Activated T-helper 2 cell treated with anti-CD3 and anti-CD28 coated beads, Interferon-gamma antibody, Interleukin-2, Interleukin-4, amounts not matched to agents 10 μg/mL and 5 μg/mL and 100 μg/mL, durations not matched to agents 14 hours and 24 hours and 36 hours (primary cell): ENCODE measurements at regions of chr10 and their contacts with region 1.

Region 1: DNA sequence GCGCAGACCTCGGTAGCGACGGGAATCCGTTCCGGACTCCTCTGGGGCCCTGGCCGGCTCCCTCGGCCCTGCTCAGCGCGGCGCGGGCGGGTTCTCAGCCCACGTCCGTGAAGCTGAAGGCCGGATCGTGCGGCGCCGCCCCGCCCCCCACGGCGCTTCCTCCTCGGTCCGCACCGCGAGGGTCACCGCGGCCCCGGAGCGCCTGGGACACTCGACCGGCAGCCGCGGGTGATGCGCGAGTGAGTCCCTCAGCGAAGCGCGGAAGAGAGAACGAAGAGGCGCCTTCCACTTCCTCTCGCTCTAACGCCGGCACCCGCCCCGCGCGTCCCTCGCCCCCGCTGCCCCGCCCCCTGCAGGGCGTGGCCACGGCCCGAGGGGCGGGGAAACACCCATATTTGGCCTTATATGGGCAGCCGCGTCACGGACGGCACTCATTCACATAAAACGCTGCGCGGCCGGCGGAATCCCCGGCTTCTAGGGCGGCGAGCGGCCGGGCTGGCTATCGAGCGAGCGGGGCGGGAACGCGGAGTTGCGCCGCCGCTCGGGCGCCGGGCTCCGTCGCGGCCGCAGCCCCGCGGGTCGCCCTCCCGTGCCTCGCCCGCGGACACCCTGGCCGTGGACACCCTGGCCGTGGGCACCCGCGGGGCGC is at the start of gene DUSP5:
- DNase-seq: peak; percentile 95
- H3K4me3 Mint-ChIP-seq: peak within 1 kb of the TSS; percentile 97
- H3K27ac Mint-ChIP-seq: peak within 1 kb of the TSS; percentile 84
- H3K4me1 Mint-ChIP-seq: peaks cover 47% of the 10 kb centered on the region
- H3K27me3 Mint-ChIP-seq: no peaks in the 10 kb centered on the region
- total RNA-seq, gene DUSP5: 84.3 and 86.2 TPM in 2 replicates

Region 2: DNA sequence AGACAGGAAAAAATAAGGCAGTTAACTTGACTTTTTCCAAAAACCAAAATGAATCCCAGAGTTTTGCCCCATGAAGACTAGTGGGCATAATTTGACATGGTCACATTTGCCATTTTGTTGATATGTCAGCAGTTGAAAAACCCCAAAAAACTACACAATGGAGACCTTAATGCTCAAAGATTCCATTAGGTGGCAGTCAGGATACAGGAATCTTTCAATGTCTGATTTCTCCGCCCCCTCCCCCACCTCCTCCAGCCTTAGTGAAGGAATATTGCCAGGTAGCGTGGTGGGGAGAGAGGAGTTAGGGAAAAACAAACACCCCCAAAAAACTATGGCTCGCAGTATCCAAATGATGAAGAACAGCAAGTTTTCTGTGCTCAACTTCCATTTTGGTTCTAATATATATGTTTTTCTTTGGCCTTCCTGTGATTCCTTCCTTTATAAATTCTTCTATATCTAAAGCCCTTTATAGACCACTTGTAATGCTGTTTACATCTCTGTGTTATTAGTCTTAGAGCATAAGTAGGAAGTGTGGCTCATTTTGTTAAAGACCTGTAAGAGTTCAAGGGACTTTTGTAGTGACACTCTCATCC is 186.1 kb before region 1 on chr10:
- intact Hi-C with region 1: loop called (anchors 2 kb)
- DNase-seq: no peak
- H3K4me3 Mint-ChIP-seq: no peak overlapping the region
- H3K27ac Mint-ChIP-seq: no peak overlapping the region
- H3K4me1 Mint-ChIP-seq: peaks cover 33% of the 10 kb centered on the region
- H3K27me3 Mint-ChIP-seq: no peaks in the 10 kb centered on the region

Region 3: GRCh38 chr10:110460111-110460809 is 37.3 kb before region 1 on chr10:
- intact Hi-C with region 1: loop called (anchors 5 kb)
- DNase-seq: no peak
- H3K4me3 Mint-ChIP-seq: no peak overlapping the region
- H3K27ac Mint-ChIP-seq: no peak overlapping the region
- H3K4me1 Mint-ChIP-seq: peaks cover 46% of the 10 kb centered on the region
- H3K27me3 Mint-ChIP-seq: no peaks in the 10 kb centered on the region

Region 4: DNA sequence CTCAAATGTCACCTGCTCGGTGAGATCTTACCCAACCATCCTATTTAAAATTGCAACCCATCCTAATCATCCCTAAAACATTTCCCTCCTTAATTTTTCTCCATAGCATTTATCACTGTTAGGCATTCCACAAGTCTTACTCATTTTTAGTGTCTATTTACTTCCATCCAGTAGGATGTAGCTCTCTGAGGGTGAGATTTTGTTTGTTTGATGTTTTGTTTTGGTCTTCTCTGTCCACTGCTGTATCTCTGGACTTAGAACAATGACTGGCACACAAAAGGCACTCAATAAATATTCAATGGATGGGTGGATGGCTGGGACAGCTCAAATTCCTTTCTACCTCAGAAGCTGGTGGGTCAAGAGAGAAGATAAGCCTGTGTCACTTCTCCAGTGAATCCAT is 15.6 kb before region 1 on chr10:
- intact Hi-C with region 1: no loop called
- DNase-seq: no peak
- H3K4me3 Mint-ChIP-seq: no peak overlapping the region
- H3K27ac Mint-ChIP-seq: no peak overlapping the region
- H3K4me1 Mint-ChIP-seq: peaks cover 2% of the 10 kb centered on the region
- H3K27me3 Mint-ChIP-seq: peaks cover 6% of the 10 kb centered on the region

Region 5: DNA sequence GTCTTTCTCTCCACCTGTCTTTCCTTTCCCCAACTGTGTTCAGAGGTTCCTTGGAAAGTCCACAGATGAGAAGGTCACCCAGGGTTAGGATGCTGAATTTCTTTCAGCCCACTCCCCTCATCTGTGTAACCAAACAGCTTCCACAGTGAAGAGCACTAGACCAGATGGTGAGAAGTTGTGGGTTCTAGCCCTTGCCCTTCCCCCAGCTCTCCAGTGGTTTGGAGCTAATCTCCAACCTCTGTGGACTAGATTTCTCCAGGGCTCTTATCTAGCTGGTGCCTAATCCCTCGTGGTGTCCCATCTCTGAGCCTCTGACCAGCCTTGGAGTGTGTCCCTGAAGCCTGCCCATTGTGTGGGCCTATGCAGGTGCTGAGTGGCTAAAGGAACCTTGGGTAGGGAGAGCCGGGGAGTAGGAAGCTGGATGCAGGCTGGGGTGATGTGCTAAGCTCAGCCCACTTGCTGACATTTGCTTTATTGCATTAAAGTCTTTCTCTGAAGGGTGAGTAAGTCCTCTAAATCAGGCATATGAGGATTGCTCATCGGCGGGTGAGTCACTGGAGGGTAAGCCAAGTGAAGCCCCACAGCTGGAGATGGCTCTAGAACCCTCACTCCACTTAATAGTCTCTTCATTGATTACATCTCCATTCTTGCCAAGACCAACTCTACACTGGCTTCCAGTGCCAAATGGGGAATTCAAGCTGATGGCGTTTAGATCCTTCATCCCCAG is 15.1 kb after region 1 on chr10:
- intact Hi-C with region 1: loop called (anchors 2 kb)
- DNase-seq: no peak
- H3K4me3 Mint-ChIP-seq: peak overlapping the region; percentile 26
- H3K27ac Mint-ChIP-seq: peak overlapping the region; percentile 78
- H3K4me1 Mint-ChIP-seq: peaks cover 60% of the 10 kb centered on the region
- H3K27me3 Mint-ChIP-seq: no peaks in the 10 kb centered on the region

Region 6: DNA sequence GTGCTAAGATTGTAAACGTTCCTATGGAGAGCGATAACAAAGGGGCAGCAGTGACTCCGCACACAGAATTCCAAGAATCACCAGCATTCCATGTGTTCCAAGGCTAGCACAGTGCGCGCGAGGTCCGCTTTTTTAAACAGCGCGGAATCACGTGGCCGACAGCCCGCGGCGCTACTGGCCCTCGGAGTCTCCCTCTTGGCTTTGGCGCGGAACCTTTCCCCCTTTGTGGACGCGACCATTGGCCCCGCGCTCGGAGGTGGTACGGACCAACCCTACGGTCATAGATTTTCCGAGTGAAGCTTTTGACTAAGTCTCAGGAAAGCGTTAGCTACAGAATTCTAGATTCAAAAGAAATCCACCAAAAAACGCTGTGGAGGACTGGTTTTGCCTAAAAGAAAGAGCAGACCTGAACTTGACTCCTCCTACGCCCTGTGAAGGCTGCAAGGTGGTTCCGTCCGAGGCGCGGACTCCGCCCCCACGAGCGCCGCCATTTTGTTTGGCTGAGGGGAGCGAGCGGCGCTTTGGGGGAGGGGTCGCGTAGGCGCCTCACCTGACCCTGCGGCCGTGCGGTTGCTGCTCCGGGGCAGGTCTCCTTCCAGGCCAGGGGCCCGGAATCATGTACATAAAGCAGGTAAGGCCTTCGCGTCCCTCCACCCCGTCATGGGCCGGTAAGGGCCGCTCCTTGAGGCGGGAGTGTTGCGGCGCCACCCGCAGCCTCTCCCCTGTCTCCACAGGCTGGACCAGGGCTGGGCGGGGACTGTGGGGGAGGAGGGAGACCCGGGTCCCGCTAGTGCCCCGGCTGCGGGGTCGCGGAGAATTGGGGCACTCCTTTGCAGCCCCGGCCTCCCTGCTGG is 69.9 kb after region 1 on chr10 and contains the start of gene SMC3:
- intact Hi-C with region 1: loop called (anchors 2 kb)
- DNase-seq: peak; percentile 90
- H3K4me3 Mint-ChIP-seq: peak within 1 kb of the TSS; percentile 90
- H3K27ac Mint-ChIP-seq: peak within 1 kb of the TSS; percentile 98
- H3K4me1 Mint-ChIP-seq: peaks cover 51% of the 10 kb centered on the region
- H3K27me3 Mint-ChIP-seq: peaks cover 9% of the 10 kb centered on the region
- total RNA-seq, gene SMC3: 78.4 and 78.8 TPM in 2 replicates